ENCODE measurements at regions of chr19 and their contacts with region 1.

Region 1: DNA sequence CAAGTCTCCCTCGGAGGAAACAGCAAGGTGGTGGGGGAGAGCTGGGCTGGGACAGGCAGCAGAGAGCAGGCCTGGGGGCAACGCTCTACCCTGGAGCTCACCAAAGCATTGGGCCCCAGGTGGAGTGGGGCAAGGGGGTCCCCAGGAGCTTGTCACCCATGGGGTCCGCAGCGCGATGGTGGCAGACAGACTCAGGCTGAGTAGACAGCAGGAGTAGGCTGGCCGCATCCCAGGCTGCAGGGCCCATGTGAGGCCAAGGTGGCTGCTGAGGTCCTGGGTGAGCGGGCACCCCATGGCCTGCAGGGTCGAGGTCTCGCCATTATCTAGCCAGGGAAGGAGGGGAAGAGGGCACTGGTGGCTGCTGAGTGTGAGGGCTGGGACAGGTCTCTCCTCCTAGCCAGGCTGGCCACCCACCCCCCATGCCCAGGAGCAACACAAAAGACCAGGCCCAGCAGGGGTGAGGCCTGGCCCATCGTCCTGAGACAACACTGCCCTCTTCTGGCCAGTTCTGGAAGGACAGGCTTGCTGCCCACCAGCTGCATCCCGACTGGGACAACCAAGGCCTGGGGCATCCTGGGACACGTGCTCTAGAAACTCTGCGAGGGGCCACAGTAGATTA is 33.1 kb downstream of the CEBPG start:
- DNase-seq: peak; percentile 75 to 88 (median 85)
- ATAC-seq: peak; percentile 88
- H3K4me3 ChIP-seq: no peak overlapping the region
- H3K27ac ChIP-seq: no peak overlapping the region
- H3K4me1 ChIP-seq: peaks cover 0 to 32% of the 10 kb centered on the region in 2 experiments; a peak in 2 of 5 replicates
- H3K27me3 ChIP-seq: peaks cover 0 to 16% of the 10 kb centered on the region in 2 experiments; a peak in 1 of 5 replicates
- CTCF ChIP-seq: peak; percentile 87 to 88 (median 87)
- EP300 ChIP-seq: no peak
- POLR2A ChIP-seq: no peak
- RAD21 ChIP-seq: peak; percentile 84 to 93

Region 2: DNA sequence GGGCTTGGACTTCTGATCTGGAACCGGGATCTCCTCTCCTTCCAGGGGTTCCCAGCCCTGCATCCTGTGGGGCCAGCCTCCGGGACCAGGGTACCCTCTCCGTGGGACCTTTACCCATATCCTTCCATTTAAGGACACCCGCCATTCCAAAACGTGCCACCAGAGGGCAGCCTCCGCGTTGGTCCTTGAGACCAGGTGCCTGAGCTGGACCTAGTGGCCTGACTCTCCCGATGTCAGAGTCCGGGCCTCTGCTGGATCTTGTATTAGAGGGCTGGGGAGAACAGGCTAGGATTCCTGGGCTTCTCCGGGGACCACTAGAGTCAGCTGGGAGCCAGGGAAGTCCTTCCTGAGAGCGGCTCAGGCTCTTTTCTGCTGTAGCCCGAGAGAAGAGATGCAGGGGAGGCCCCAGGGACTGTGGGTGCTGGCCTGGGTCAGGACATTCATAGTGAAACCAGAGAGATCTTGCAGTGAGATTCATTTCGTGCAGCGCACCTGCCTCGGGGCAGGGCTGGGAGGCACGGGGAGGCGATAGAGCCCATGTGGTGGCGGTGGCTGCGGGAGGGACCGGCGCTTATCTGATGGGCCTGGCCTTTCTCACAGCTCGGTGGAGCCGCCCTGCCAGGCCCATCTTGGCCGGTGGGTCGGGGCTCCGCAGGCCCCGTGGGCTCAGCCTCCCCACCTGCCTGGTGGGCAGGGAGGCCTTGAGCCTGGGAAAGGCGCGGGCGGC is 171.2 kb before region 1 on chr19:
- CTCF ChIA-PET with region 1: interaction called, 7 read pairs
- POLR2A ChIA-PET with region 1: interaction called, 3 read pairs
- in situ Hi-C with region 1: loop called (anchors 5 kb)
- intact Hi-C with region 1: loop called (anchors 1 kb)
- DNase-seq: peak; percentile 80 to 84 (median 82)
- ATAC-seq: peak; percentile 89
- H3K4me3 ChIP-seq: no peak overlapping the region
- H3K27ac ChIP-seq: no peak overlapping the region
- H3K4me1 ChIP-seq: peaks cover 0 to 10% of the 10 kb centered on the region in 2 experiments; a peak in 2 of 5 replicates
- H3K27me3 ChIP-seq: peaks cover 2 to 39% of the 10 kb centered on the region in 2 experiments; a peak in 3 of 5 replicates
- CTCF ChIP-seq: peak; percentile 85 to 95 (median 91)
- EP300 ChIP-seq: no peak
- POLR2A ChIP-seq: no peak
- RAD21 ChIP-seq: peak; percentile 74 to 85